ENCODE measurements at regions of chr1 and their contacts with region 1.

Region 1: GRCh38 chr1:186404454-186405051 is 28.9 kb downstream of the ODR4 start:
- DNase-seq: no peak
- H3K4me3 Mint-ChIP-seq: no peak overlapping the region
- H3K27ac Mint-ChIP-seq: no peak overlapping the region
- H3K4me1 Mint-ChIP-seq: peaks cover 14% of the 10 kb centered on the region
- H3K27me3 Mint-ChIP-seq: no peaks in the 10 kb centered on the region

Region 2: GRCh38 chr1:186375088-186375953 is 29.2 kb before region 1 on chr1 and contains the starts of genes ODR4 and TPR:
- intact Hi-C with region 1: loop called (anchors 2 kb)
- DNase-seq: peak; percentile 97
- H3K4me3 Mint-ChIP-seq: peak within 1 kb of the TSS; percentile 96
- H3K27ac Mint-ChIP-seq: peak within 1 kb of the TSS; percentile 97
- H3K4me1 Mint-ChIP-seq: peaks cover 31% of the 10 kb centered on the region
- H3K27me3 Mint-ChIP-seq: no peaks in the 10 kb centered on the region
- total RNA-seq, gene ODR4: 16.1 and 17.0 TPM in 2 replicates
- total RNA-seq, gene TPR: 154 and 160 TPM in 2 replicates

Region 3: DNA sequence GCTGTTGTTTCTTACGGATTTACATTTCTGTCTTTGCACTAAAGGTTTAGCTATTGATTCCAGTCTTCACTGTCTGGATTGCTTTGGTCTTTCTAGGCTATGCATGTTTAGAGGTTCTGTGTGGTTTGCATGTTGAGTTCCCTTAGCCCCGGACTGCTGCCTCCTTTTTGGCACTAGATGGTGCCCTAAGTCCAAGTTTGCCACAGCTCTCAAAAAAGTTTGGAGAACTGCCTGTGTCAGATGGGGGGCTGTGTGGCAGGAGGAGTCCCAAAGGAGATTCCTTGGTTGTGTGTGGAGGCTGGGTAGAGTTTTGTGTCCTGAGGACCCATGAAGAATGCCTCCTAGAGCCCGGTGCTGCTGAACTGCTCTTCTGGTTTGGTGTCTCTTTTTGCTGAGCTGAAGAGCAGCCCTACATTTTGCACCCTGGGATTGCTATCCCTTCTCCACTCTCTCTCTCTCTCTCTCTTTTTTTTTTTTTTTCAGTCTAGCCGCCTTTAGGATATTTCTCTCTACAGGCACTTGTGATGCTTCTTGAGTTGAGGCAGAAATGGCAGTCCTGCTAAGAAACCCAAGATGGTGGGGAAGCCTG is 201.3 kb after region 1 on chr1:
- intact Hi-C with region 1: loop called (anchors 5 kb)
- DNase-seq: no peak
- H3K4me3 Mint-ChIP-seq: no peak overlapping the region
- H3K27ac Mint-ChIP-seq: peak overlapping the region; percentile 26
- H3K4me1 Mint-ChIP-seq: peaks cover 7% of the 10 kb centered on the region
- H3K27me3 Mint-ChIP-seq: peaks cover 60% of the 10 kb centered on the region

Measured in activated T-helper 2 cell treated with anti-CD3 and anti-CD28 coated beads, Interferon-gamma antibody, Interleukin-2, Interleukin-4, amounts not matched to agents 10 μg/mL and 5 μg/mL and 100 μg/mL, durations not matched to agents 14 hours and 24 hours and 36 hours (primary cell).